Activated CD8-positive, alpha-beta memory T cell treated with anti-CD3 and anti-CD28 coated beads, Interleukin-2, amount 10 ng/mL, durations not matched to agents 7 days and 5 days (primary cell): ENCODE measurements at regions of chr20 and their contacts with region 1.

Region 1: DNA sequence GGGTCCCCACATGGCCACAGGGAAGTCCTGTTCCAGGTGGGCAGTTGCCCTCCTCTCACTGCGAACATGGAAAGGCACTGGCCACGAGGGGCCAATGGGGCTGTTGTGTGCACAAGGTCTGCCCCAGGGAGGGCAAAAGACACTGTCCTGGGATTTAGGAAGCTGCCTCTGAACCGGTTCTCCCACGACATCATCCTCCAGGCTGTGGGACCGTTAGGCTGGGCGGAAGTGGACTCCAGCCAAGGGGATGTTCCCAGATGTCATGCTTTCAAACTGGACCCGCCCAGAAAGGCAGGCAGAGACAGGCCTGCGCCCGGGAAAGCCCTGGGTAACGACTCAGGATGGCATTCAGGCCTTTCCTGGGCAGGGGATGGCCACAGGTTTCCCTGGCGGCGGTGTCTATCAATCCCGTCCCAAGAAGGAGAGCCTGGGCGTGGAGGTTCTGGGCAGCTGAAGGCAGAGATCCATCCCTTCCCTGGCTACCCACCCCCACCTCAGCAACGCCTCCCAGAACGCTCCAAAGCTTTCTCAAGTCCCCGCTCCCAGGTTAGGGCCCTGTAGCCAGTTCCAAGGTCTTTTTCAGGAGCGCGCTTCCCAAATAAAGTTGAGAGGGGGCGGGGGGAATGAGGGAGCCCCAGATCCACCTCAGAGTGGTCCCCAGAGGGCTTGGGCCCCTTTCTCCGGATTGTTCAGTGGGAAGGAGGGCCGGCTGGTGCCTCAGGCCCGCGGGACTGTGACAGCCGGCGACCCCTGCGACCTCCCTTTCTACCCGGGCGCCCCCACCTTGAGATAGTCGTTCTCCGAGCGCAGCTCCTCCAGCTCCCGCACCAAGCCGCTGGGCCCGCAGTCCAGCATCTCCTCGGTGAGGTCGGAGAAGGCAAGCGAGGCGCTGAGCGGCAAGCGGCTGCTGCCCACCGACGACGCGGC is 13.8 kb upstream of the TLDC2 start:
- DNase-seq: no peak
- ATAC-seq: no peak
- H3K4me3 Mint-ChIP-seq: no peak overlapping the region
- H3K27ac Mint-ChIP-seq: no peak overlapping the region
- H3K4me1 Mint-ChIP-seq: peaks cover 8% of the 10 kb centered on the region
- H3K27me3 Mint-ChIP-seq: peaks cover 25% of the 10 kb centered on the region

Region 2: DNA sequence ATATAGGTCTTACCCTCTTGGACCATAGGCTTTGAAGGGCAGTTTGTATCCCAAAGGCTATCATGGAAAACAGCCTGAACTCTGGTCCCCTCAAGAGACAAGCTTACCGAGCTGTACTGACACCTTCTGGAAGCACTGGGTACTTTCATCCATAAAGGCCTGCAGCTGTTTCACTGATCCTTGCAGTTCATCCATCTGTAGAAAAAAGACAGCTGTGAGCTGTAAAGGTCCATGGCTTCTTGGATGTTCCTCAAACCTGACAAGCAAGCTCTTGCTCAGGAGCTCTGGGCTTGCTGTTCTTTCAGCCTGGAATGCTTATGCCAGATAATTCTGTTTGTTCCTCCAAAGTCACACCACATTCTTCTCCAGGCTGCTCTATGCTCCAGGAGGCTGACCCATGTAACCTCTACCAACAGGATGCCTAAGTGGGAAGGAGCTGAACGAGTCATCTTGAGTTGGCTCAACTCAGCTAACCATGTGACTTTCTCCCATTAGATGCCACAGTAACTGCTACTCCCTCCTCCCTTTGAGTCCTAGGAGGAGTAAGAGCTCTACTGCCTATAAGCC is 107.4 kb before region 1 on chr20:
- CTCF ChIA-PET with region 1: interaction called, 13 read pairs
- DNase-seq: peak; percentile 65
- ATAC-seq: peak; percentile 85
- H3K4me3 Mint-ChIP-seq: no peak overlapping the region
- H3K27ac Mint-ChIP-seq: no peak overlapping the region
- H3K4me1 Mint-ChIP-seq: peaks cover 14% of the 10 kb centered on the region
- H3K27me3 Mint-ChIP-seq: no peaks in the 10 kb centered on the region

Region 3: GRCh38 chr20:36835453-36836198 is 26.5 kb before region 1 on chr20:
- CTCF ChIA-PET with region 1: interaction called, 19 read pairs
- DNase-seq: peak; percentile 94
- ATAC-seq: peak; percentile 97
- H3K4me3 Mint-ChIP-seq: peak overlapping the region; percentile 79
- H3K27ac Mint-ChIP-seq: peak overlapping the region; percentile 93
- H3K4me1 Mint-ChIP-seq: peaks cover 22% of the 10 kb centered on the region
- H3K27me3 Mint-ChIP-seq: no peaks in the 10 kb centered on the region

Region 4: GRCh38 chr20:36872852-36873251 is 10.7 kb after region 1 on chr20:
- CTCF ChIA-PET with region 1: interaction called, 15 read pairs
- DNase-seq: no peak
- ATAC-seq: no peak
- H3K4me3 Mint-ChIP-seq: no peak overlapping the region
- H3K27ac Mint-ChIP-seq: no peak overlapping the region
- H3K4me1 Mint-ChIP-seq: peaks cover 2% of the 10 kb centered on the region
- H3K27me3 Mint-ChIP-seq: no peaks in the 10 kb centered on the region

Region 5: DNA sequence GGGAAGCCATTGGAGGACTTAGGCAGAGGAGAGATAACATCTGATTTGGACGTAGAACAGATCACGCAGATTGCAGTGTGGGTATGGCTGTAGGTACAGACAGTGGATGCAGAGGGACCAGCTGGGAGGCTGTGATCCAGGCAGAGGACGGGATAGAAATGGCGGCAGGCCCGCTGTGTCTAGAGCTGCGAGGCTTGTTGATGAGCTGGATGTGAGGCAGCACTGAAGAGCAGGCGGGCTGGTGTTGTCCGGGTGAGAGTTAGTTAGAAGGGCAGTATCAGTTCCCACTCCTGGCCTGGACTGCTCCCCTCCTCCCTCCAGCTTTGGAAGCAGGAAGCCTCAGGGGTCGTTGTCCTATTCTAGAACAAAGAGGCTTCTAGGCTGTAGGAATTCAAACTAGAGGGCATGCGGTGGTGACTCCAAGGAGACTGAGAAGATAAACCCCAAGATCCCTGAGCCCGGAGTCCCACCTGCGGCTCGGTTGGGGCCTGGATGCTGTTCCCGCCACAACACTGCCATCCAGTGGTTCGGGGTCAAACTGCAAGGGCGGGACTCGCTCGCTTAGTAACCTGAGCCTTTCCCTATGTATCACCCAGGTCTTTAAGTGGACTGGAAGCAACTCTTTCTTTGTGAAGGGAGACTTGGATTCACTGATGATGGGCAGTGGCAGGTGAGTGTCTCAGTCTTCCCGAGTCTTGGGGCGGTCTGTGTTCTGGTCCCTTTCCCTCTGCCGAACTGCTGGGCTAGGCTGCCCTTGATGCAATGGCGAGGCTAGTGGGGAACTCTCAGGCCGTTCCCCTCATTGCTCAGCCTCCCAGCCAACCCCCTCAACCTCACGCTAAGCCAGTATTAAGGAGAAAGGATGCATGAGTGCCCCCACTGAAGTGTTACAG is 25.0 kb after region 1 on chr20:
- CTCF ChIA-PET with region 1: interaction called, 10 read pairs
- DNase-seq: peak; percentile 85
- ATAC-seq: peak; percentile 90
- H3K4me3 Mint-ChIP-seq: no peak overlapping the region
- H3K27ac Mint-ChIP-seq: no peak overlapping the region
- H3K4me1 Mint-ChIP-seq: peaks cover 11% of the 10 kb centered on the region
- H3K27me3 Mint-ChIP-seq: no peaks in the 10 kb centered on the region